ENCODE measurements at regions of chr12 and their contacts with region 1.

Region 1: DNA sequence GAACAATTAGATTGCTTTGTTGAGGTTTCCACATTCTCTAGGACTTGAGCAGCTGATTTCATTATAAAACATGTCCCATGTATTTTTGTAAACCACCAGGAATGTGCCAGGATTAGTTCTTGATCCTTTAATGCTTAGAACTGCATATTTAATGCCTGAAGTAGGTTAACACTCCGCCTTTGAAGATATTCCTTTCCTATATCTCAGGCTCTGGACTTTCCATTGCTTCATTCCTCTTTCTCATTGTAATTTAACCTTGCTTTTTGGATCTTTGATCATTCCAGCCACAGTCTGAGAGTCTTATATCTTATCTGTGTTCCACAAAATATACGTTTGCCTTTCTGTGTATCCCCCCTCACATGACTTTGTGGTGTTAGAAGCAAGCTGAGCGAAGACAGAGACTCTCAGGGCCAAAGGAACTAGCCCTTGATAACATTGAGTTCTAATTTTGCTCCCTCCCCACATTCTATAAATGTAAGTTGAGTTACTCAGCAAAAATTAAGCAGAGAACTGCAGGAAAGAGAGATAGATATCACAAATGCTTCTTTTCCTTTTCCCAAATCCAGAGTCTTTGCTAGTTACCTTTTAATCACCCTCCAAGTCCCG is 2.4 kb upstream of the CLEC1B start:
- DNase-seq: no peak
- ATAC-seq: no peak
- H3K4me3 ChIP-seq: no peak overlapping the region
- H3K27ac ChIP-seq: no peak overlapping the region
- H3K4me1 ChIP-seq: no peaks in the 10 kb centered on the region
- H3K27me3 ChIP-seq: peaks cover 0 to 2% of the 10 kb centered on the region in 2 experiments; a peak in 2 of 4 replicates
- CTCF ChIP-seq: no peak
- EP300 ChIP-seq: no peak
- POLR2A ChIP-seq: no peak
- RAD21 ChIP-seq: no peak

Region 2: DNA sequence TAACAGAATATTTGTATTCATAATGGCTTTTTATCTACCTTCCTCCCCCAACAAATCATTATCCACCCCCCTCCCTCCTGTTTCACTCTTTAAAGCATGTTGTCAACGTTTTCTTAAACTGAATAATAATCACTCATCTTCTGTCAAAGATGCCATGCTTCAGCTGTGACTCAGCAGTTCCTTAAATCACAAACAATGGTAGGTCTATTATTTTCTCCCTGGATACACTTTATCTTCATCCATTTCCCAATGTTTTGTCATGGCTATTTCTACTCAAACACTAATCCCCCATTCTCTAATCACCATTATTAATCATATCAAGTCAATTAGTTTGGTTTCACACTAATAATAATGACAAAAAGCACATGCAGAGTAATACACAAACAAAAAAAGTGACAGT is 15.6 kb after region 1 on chr12:
- CTCF ChIA-PET with region 1: interaction called, 4 read pairs
- POLR2A ChIA-PET with region 1: no interaction called
- RAD21 ChIA-PET with region 1: no interaction called
- SMC1A ChIA-PET with region 1: interaction called, 10 read pairs
- in situ Hi-C with region 1: no loop called
- intact Hi-C with region 1: no loop called
- DNase-seq: no peak
- ATAC-seq: no peak
- H3K4me3 ChIP-seq: no peak overlapping the region
- H3K27ac ChIP-seq: no peak overlapping the region
- H3K4me1 ChIP-seq: no peaks in the 10 kb centered on the region
- H3K27me3 ChIP-seq: peaks cover 0 to 4% of the 10 kb centered on the region in 2 experiments; a peak in 1 of 4 replicates
- CTCF ChIP-seq: no peak
- EP300 ChIP-seq: no peak
- POLR2A ChIP-seq: no peak
- RAD21 ChIP-seq: no peak

Region 3: DNA sequence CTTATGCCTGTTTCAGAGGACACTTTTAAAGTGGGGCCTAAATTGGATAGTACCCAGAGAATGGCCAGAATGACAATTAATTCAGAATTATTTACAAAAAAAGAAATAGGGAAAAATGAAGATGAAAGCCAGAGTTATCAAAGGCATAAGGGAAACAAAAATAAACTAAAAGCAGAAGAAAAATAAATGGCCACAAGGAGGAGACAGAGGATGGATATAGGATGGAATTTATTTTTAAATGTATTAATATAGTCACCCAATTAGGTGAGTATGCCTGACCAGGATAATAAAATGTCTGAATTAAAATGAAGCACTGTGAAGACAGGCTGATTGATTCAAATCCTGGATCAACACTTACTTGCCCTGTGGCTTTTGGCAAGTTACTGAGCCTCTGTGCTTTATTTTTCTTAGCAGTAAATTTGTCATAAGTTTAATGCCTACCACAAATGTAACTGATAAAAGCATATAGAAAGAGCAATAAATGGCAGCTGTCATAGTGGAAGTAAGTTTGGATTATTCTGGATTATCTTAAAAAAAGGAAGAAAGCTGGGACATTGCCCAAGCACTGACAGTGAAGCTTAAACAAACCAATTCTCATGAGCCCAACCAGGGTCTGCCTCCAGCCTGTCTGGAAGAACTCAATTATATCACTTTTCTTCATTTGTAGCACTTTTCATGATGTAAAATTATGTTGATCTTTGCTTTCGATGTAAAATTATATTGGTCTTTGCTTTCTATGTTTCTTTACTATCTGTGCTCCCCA is 32.7 kb after region 1 on chr12:
- CTCF ChIA-PET with region 1: interaction called, 3 read pairs
- POLR2A ChIA-PET with region 1: no interaction called
- RAD21 ChIA-PET with region 1: interaction called, 4 read pairs
- SMC1A ChIA-PET with region 1: no interaction called
- in situ Hi-C with region 1: no loop called
- intact Hi-C with region 1: loop called (anchors 2 kb)
- DNase-seq: no peak
- ATAC-seq: no peak
- H3K4me3 ChIP-seq: no peak overlapping the region
- H3K27ac ChIP-seq: no peak overlapping the region
- H3K4me1 ChIP-seq: no peaks in the 10 kb centered on the region
- H3K27me3 ChIP-seq: no peaks in the 10 kb centered on the region; a peak in 1 of 4 replicates
- CTCF ChIP-seq: peak; percentile 19 to 49 (median 32); a peak in 4 of 6 replicates
- EP300 ChIP-seq: no peak
- POLR2A ChIP-seq: no peak
- RAD21 ChIP-seq: peak; percentile 69